Body of pancreas (tissue), 4 donors: ENCODE measurements at regions of chr2 and their contacts with region 1.

Region 1: DNA sequence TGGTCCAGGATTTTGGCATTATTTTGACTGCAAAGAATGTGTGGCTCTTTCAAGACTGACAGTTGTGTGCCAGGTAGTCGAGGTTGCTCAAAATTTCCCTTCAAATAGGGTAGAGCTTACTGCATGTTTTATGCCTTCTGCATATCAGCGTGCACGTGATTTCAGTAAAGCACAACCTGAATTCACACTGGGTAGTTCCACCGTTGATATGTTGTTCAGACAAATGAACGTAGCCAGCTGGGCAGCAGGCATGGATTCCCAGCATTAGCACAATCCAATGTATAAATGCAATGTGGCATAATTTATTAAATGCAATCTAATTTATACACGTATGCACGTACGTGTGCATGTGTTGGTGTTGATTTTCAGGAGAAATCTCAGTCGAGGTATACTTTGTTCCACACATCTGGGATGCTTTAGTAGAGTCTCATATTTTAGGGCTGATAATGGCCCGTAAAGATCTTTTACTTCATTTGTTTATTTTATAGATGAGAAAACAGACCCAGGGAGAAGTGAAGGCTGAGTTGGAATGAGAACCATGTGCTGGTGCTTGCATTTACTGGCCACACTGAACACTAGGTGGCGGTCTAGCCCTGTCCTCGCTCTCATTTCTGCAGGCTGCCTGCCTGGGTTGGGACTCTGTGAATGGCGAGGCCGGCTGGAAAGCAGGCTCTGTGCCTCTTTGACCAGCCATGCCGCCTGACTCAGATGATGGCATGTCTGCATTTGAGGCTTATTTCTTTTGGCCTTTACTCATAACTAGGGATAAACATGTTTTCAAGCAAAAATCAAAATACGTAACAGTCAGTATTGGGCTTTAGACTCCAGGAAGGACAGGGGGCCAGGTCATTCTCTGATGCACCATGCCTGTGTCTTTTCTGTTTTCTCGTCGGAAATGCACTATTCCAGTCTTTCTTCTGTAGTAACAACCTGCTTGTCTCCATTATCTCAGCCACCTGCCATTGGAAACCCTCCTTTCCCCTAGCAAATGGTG is 120.4 kb downstream of the RNF144A start:
- DNase-seq: peak; percentile 77 to 83 (median 80)
- ATAC-seq: peak; percentile 77
- H3K4me3 ChIP-seq: no peak overlapping the region
- H3K27ac ChIP-seq: peak overlapping the region; percentile 56 to 87 (median 74)
- H3K4me1 ChIP-seq: peaks cover 48% of the 10 kb centered on the region
- H3K27me3 ChIP-seq: no peaks in the 10 kb centered on the region
- CTCF ChIP-seq: peak; percentile 53 to 79 (median 74)
- POLR2A ChIP-seq: peak in 1 of 3 donors; percentile 7

Region 2: DNA sequence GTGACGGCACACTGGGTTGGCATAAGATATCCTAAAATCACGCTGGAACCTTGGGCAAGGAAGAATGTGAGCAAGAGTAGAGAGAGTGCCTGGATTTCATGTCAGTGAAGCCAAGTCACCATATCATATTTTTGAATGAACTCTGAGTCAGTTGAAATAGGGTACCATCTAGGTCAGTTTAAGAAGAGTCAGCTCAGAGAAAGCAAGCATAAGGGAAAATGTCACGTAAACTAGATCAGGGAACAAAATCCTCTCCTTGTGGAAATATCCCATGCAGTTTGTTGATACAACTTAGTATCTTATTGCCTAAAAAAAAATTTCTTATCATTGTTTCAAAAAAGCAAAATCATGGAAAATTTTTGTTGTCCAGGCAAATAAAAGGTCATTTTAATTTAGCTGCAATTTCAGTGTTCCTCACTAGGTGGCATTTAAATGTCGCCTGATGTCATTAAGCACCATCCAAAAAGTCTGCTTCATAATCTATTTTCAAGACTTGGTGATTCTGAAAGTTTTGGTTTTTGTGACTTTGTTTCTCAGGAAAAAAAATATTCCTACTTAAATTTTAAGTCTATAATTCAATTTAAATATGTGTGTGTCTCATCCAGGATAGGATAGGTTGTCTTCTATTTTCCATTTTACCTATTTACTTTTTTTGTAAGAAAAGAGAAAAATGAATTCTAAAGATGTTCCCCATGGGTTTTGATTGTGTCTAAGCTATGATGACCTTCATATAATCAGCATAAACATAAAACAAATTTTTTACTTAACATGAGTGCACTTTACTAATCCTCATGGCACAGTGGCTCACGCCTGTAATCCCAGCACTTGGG is 140.5 kb before region 1 on chr2:
- intact Hi-C with region 1: loop called (anchors 5 kb)
- DNase-seq: no peak
- ATAC-seq: peak; percentile 67
- H3K4me3 ChIP-seq: no peak overlapping the region
- H3K27ac ChIP-seq: no peak overlapping the region
- H3K4me1 ChIP-seq: no peaks in the 10 kb centered on the region
- H3K27me3 ChIP-seq: no peaks in the 10 kb centered on the region
- CTCF ChIP-seq: peak; percentile 42 to 91 (median 83)
- POLR2A ChIP-seq: no peak